Activated naive CD8-positive, alpha-beta T cell treated with anti-CD3 and anti-CD28 coated beads, Interleukin-2, amount 10 ng/mL, durations not matched to agents 7 days and 5 days (primary cell): ENCODE measurements at regions of chr10 and their contacts with region 1.

Region 1: DNA sequence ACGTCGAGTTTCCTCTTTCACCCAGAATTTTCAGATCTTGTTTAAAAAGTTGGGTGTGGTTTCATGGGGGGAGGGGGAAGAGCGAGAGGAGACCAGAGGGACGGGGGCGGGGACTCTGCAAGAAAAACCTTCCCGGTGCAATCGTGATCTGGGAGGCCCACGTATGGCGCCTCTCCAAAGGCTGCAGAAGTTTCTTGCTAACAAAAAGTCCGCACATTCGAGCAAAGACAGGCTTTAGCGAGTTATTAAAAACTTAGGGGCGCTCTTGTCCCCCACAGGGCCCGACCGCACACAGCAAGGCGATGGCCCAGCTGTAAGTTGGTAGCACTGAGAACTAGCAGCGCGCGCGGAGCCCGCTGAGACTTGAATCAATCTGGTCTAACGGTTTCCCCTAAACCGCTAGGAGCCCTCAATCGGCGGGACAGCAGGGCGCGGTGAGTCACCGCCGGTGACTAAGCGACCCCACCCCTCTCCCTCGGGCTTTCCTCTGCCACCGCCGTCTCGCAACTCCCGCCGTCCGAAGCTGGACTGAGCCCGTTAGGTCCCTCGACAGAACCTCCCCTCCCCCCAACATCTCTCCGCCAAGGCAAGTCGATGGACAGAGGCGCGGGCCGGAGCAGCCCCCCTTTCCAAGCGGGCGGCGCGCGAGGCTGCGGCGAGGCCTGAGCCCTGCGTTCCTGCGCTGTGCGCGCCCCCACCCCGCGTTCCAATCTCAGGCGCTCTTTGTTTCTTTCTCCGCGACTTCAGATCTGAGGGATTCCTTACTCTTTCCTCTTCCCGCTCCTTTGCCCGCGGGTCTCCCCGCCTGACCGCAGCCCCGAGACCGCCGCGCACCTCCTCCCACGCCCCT is at the start of gene VIM:
- DNase-seq: peak; percentile 87
- ATAC-seq: peak; percentile 43
- H3K4me3 Mint-ChIP-seq: peak within 1 kb of the TSS; percentile 91
- H3K27ac Mint-ChIP-seq: peak within 1 kb of the TSS; percentile 94
- H3K4me1 Mint-ChIP-seq: peaks cover 41% of the 10 kb centered on the region
- H3K27me3 Mint-ChIP-seq: no peaks in the 10 kb centered on the region
- total RNA-seq, gene VIM: 1,681 to 1,738 TPM

Region 2: GRCh38 chr10:16817125-16818019 is 410.9 kb before region 1 on chr10 and contains the start of gene RSU1:
- POLR2A ChIA-PET with region 1: interaction called, 21 read pairs
- DNase-seq: peak; percentile 100
- ATAC-seq: peak; percentile 97
- H3K4me3 Mint-ChIP-seq: peak within 1 kb of the TSS; percentile 86
- H3K27ac Mint-ChIP-seq: peak within 1 kb of the TSS; percentile 96
- H3K4me1 Mint-ChIP-seq: peaks cover 24% of the 10 kb centered on the region
- H3K27me3 Mint-ChIP-seq: peaks cover 2% of the 10 kb centered on the region
- total RNA-seq, gene RSU1: 69.5 to 72.7 TPM

Region 3: DNA sequence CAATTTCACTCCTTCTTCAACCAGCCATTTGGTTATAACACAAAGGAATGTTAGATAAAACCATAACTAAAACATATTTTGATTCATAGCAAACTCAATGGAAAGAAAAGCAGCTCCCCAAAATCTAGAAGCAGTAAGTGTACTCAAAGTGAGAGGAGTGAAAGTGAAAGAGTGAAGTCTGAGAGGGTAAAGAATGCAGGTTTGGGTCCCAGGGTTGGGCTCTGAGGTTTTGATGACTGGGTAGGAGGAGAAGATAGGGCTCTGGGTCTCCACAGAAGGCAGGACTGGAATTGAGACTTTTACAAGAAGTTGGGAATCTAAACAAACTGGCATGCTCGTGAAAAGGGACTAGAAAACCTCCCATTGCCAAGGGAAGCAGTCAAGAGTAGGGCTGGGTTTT is 325.7 kb before region 1 on chr10:
- POLR2A ChIA-PET with region 1: interaction called, 14 read pairs
- DNase-seq: no peak
- ATAC-seq: peak; percentile 95
- H3K4me3 Mint-ChIP-seq: peak overlapping the region; percentile 68
- H3K27ac Mint-ChIP-seq: peak overlapping the region; percentile 79
- H3K4me1 Mint-ChIP-seq: peaks cover 10% of the 10 kb centered on the region
- H3K27me3 Mint-ChIP-seq: no peaks in the 10 kb centered on the region

Region 4: GRCh38 chr10:17029581-17030271 is 198.6 kb before region 1 on chr10:
- POLR2A ChIA-PET with region 1: interaction called, 118 read pairs
- DNase-seq: peak; percentile 60
- ATAC-seq: peak; percentile 41
- H3K4me3 Mint-ChIP-seq: peak overlapping the region; percentile 81
- H3K27ac Mint-ChIP-seq: peak overlapping the region; percentile 87
- H3K4me1 Mint-ChIP-seq: peaks cover 76% of the 10 kb centered on the region
- H3K27me3 Mint-ChIP-seq: no peaks in the 10 kb centered on the region

Region 5: DNA sequence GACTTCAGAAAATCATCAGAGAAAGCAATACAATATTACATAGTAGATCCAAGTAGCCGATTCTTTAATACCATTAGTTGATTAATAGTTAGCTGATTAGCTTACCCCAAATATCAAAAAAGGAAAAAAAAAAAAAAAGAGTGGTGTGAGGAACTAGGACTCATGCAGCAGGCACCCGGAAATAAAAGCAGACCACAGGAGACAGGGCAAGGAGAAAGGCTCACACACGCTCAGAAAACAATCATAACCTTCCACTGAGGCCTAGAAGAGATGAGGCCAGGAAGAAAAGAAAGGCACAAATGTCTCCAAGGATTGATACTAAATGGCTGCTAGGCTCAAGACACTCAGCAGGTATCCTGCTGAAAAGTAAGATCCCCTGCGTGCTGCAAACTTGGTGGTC is 52.8 kb before region 1 on chr10:
- POLR2A ChIA-PET with region 1: interaction called, 12 read pairs
- DNase-seq: no peak
- ATAC-seq: peak; percentile 87
- H3K4me3 Mint-ChIP-seq: peak overlapping the region; percentile 60
- H3K27ac Mint-ChIP-seq: peak overlapping the region; percentile 63
- H3K4me1 Mint-ChIP-seq: peaks cover 17% of the 10 kb centered on the region
- H3K27me3 Mint-ChIP-seq: no peaks in the 10 kb centered on the region

Region 6: GRCh38 chr10:17216217-17216900 is 12.0 kb before region 1 on chr10:
- POLR2A ChIA-PET with region 1: interaction called, 64 read pairs
- DNase-seq: no peak
- ATAC-seq: peak; percentile 99
- H3K4me3 Mint-ChIP-seq: peak overlapping the region; percentile 58
- H3K27ac Mint-ChIP-seq: peak overlapping the region; percentile 95
- H3K4me1 Mint-ChIP-seq: peaks cover 40% of the 10 kb centered on the region
- H3K27me3 Mint-ChIP-seq: no peaks in the 10 kb centered on the region